ENCODE measurements at regions of chr18 and their contacts with region 1.

Region 1: DNA sequence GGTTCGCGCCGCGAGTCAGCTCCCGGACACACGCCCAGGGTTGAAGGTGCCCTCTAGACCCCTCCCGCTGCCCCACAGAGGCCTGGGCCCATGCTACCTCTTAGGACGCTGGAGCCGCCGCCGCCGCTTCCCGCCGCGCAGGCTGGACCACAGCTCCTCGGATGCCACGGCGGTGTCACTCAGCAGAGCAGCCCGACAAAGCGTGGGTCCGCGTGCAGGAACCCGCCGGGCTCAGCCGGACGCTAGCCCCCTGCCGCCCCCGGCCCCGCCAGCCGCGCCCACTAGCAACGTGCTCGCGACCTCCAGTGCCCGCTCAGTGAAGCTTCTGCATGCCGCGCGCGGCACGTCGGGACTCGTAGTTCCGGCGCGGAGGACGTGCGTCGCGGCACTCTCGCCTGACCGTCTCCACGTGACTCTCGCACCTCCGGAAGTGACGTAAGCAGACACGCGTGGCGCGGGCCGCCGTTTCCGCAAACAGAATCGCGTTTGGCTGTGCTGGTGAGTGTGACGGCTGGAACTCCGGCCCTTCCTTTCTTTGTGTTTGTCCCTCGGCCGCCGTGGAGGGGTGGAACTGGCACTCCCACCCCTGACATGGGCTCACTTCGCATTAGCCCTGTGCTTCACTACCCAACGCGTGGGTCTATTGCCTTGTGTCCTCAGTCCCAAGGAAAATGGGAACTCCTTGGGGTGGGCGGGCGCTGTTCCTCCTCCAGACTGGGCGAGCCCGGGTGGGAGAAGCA is at the starts of genes FAM210A and RNMT:
- DNase-seq: peak; percentile 95 to 98 (median 97)
- H3K4me3 ChIP-seq: peak within 1 kb of the TSS; percentile 71 to 100 (median 96)
- H3K27ac ChIP-seq: peak within 1 kb of the TSS; percentile 30 to 96 (median 88)
- H3K27me3 ChIP-seq: no peaks in the 10 kb centered on the region
- CTCF ChIP-seq: peak in 55 of 56 donors; percentile 10 to 76 (median 52)
- total RNA-seq, gene FAM210A: 10.7 to 22.2 (median 16.6) TPM
- total RNA-seq, gene RNMT: 25.2 to 79.9 (median 53.7) TPM

Region 2: DNA sequence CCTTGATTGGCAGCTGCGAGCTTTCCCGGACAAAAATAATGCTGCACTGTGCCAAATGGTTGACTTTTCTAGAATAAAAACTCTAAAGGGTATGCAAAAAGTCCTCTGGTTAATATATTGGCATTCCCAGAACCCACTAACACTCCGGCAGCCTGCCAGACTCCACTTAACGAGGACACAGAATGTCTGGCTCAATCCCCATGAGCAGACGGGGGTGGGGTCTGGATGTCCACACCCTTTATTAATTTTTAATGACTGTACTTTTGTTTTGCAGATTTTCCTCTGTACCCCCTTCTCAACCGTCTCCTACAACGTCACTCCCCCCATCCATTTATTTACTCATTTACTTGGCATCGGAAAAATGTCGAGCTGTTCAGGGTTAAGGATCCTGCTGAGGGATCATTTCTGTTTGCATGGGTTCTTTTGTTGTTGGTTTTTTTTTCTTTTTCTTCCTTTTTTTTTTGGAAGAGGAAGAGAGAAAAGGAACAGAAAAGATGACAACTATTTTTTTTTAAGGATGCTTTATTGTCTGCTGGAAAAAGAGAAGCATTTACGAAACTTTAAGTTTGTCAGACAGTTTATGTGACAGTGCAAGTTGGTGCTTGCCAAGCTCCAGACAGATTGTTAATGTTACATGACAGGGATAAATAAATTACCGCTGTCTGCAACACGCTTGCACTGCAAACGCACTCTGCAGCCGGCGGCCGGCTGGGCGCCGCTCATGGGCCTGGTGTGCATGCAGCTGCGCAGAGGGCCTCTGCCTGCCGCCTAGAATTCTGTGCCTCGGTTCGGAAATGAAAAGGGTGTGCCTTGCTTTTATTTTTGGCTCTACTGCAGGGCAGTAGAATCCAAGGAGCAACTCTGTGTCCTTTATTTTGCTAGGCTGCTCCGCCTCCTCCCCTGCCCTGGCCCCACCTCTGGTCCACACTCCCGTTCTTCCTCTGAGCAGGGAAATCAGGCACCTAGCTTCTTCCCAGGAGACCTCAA is 504.2 kb before region 1 on chr18:
- intact Hi-C with region 1: loop called (anchors 2 to 5 kb)
- DNase-seq: peak in 5 of 10 donors; percentile 51 to 71 (median 56)
- H3K4me3 ChIP-seq: peak overlapping the region in 57 of 59 donors; percentile 5 to 92 (median 31)
- H3K27ac ChIP-seq: peak overlapping the region in 56 of 59 donors; percentile 2 to 89 (median 68)
- H3K27me3 ChIP-seq: no peaks in the 10 kb centered on the region
- CTCF ChIP-seq: peak in 3 of 56 donors; percentile 8 to 11 (median 9)

Region 3: GRCh38 chr18:13387855-13388548 is 338.4 kb before region 1 on chr18:
- intact Hi-C with region 1: no loop called
- DNase-seq: peak in 1 of 10 donors; percentile 9
- H3K4me3 ChIP-seq: no peak overlapping the region
- H3K27ac ChIP-seq: no peak overlapping the region
- H3K27me3 ChIP-seq: no peaks in the 10 kb centered on the region
- CTCF ChIP-seq: no peak

Region 4: DNA sequence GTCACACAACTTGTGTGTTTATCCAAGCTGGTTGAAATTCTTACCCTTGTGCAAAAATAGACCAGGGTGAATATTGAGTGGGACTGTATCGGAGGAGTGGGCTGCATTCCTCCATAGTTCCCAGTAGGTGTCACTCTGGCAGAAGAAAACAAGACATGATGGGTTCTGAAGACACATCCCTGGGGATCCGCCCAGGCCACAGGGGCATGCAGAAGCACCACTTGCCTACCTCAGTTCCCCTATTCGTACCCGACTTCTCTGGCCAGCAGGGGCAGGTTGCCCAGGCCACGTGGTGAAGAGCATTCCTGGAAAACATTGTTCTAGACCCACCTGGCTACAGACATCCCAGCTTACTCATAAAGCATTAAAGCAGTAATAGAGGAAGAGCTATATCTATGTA is 168.3 kb before region 1 on chr18:
- intact Hi-C with region 1: loop called (anchors 5 to 10 kb)
- DNase-seq: peak in 5 of 10 donors; percentile 56 to 72 (median 69)
- H3K4me3 ChIP-seq: peak overlapping the region in 3 of 59 donors; percentile 7 to 35 (median 10)
- H3K27ac ChIP-seq: peak overlapping the region in 54 of 59 donors; percentile 8 to 100 (median 86)
- H3K27me3 ChIP-seq: no peaks in the 10 kb centered on the region
- CTCF ChIP-seq: peak; percentile 52 to 90 (median 78)

Region 5: DNA sequence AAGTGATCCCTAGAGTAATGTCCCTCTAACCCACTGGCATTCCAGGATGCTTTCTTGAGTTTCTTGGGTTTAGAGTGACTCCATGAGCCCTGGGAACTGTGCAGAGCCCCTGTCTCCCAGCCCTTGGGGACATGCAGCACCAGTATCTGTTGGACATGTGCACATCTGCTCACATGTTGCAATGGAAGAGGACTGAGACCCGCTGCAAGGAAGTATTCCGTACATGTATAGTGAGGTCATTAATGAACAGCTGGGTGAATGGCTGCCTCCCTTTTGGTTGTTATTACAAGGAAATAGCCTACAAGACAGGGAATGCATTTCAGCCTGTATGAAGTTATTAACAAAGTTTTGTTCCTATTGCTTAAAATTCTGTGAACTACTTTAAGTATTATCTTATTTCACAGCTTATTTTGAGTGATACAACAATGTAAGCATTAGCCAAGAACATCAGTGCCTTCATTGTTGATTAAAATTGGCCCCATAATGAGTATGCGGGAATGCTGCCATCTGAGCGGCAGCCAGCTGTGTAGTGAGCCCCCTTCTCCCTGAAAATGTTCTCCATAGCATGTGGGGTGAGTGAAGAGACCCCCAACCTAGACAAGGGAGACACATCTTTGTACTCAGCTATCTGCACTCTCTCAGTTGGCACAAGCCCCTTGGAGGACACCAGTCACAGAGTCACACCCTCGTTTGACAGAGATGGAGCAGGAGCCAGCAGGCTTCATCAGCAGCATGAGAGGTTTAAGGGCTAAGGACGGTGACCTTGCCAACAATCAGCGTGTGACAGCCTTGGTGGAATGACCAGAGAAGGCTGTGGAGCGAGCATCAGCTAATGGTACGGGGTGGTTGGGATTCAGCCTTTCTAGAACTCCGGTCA is 87.4 kb before region 1 on chr18:
- intact Hi-C with region 1: loop called (anchors 5 kb)
- DNase-seq: peak in 1 of 10 donors; percentile 33
- H3K4me3 ChIP-seq: peak overlapping the region in 9 of 59 donors; percentile 2 to 39 (median 9)
- H3K27ac ChIP-seq: peak overlapping the region in 57 of 59 donors; percentile 27 to 99 (median 82)
- H3K27me3 ChIP-seq: no peaks in the 10 kb centered on the region
- CTCF ChIP-seq: no peak

Region 6: DNA sequence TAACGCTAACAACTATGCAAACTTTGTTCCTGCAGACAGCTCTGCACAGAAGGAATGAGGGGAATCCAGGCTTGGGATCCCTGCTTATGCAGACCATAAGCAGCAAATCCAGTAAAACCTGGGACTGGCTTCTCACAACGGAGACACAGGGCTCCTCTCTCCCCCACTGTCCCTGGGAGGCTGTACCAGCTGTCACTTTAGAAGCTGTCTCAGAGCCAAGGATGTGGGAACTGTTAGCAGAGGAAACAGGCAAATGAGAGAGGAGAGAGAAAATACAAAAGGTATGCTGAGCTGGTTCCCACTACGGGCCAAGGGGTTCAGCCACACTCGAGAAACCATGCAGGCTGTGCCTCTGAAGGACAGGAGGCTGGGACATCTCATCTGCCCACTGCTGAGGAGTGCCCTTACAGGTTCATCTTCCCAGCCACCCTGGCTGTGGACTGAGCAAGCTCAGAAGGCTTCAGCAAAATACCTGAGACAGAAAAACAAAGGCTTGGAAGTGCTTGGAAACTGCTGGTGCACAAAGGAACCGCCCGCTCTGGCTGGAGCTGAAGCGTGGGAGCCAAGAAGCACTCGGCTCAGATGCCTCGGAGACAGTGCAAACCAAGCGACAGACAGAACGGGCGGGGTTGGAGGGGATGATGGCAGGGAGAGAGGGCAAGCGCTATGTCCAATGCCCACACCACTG is 72.5 kb before region 1 on chr18:
- intact Hi-C with region 1: loop called in 1 of 2 experiments (anchors 5 kb)
- DNase-seq: peak in 7 of 10 donors; percentile 48 to 69 (median 64)
- H3K4me3 ChIP-seq: peak overlapping the region in 50 of 59 donors; percentile 1 to 53 (median 32)
- H3K27ac ChIP-seq: peak overlapping the region in 44 of 59 donors; percentile 5 to 83 (median 50)
- H3K27me3 ChIP-seq: no peaks in the 10 kb centered on the region
- CTCF ChIP-seq: no peak

Region 7: DNA sequence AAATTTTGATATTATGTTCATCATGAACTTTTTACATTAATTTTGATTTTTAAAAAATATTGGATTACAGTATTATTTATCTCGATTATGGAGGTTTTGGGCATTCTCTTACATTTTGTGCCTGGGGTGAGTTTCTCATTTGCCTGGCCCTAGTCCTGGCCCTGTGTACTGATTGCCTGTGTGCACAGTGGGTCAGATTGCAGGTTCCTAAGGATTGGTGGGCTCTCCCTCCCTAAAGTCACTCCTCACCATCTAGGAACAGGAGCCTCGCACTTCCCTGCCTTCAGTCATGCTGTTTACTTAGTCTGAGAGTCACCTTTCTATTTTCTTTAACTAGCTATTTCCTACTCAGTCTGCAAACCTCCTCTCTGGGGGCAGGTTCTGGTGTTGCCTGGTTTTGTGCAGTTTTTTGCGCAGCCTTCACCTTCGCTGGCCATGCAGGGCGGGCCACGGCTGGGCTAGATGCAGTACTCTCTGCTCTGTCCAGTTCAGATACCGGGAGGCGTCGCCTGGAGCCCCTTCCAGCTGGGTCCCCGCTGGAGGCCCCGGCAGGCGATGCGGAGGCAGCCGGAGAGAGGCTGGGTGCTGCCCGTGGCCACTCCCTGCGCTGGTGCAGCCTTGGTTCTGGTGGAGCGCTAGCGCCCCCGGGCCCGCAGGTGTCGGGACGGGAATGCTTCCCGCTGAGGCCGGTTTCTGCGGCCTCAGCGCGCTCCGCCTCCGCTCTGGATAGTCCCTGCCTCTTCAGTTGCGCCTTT is 74.3 kb after region 1 on chr18:
- intact Hi-C with region 1: loop called in 1 of 2 experiments (anchors 5 kb)
- DNase-seq: peak; percentile 53 to 83 (median 62)
- H3K4me3 ChIP-seq: peak overlapping the region; percentile 21 to 67 (median 48)
- H3K27ac ChIP-seq: no peak overlapping the region
- H3K27me3 ChIP-seq: peaks cover 0 to 15% (median 0%) of the 10 kb centered on the region in 45 donors
- CTCF ChIP-seq: peak in 54 of 56 donors; percentile 26 to 76 (median 54)